Endothelial cell of umbilical vein (primary cell): ENCODE measurements at regions of chr12 and their contacts with region 1.

Region 1: DNA sequence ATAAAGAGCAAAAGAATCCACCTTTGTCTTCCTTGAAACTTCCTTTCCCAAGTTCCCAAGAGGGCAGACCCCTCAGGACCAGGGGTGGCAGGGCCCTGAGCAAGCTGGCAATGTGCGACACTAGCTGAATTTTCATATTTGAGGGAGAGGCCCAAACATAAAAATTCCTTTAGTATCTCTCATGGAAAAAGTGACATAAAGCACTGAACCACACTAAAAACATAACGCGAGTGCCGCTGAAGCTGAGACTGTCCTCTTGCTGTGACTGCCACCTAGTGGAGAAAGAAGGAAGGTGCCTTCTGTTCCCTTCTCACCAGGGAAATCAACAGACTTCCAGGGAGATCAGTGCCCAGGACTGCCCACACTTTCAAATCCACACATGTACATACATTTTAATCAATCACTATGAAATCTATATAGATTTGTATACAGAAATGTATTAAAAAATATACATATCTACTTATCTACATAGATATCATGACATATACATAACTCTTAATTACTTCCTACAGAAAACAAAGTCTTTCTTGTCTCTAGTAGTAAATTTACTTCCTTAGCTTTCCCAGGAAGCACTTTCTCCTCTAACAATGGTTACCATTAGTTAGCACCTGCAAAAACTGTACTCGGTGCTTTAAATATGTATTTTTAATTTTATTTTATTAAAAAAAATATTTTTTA is 53.8 kb downstream of the SSH1 start:
- DNase-seq: peak; percentile 94
- H3K4me3 ChIP-seq: no peak overlapping the region
- H3K27ac ChIP-seq: peak overlapping the region; percentile 90
- H3K4me1 ChIP-seq: peaks cover 31% of the 10 kb centered on the region
- H3K27me3 ChIP-seq: no peaks in the 10 kb centered on the region
- CTCF ChIP-seq: peak; percentile 82 to 85
- POLR2A ChIP-seq: no peak

Region 2: GRCh38 chr12:108562348-108563135 is 241.0 kb before region 1 on chr12 and contains the start of gene ISCU:
- CTCF ChIA-PET with region 1: interaction called, 29 read pairs
- POLR2A ChIA-PET with region 1: no interaction called
- dilution Hi-C with region 1: no loop called
- intact Hi-C with region 1: loop called (anchors 1 kb)
- DNase-seq: peak; percentile 96
- H3K4me3 ChIP-seq: peak within 1 kb of the TSS; percentile 78 to 95 (median 86)
- H3K27ac ChIP-seq: peak within 1 kb of the TSS; percentile 83
- H3K4me1 ChIP-seq: peaks cover 34% of the 10 kb centered on the region
- H3K27me3 ChIP-seq: no peaks in the 10 kb centered on the region
- CTCF ChIP-seq: no peak
- POLR2A ChIP-seq: peak; percentile 94
- total RNA-seq, gene ISCU: 74.8 and 75.0 TPM in 2 replicates

Region 3: DNA sequence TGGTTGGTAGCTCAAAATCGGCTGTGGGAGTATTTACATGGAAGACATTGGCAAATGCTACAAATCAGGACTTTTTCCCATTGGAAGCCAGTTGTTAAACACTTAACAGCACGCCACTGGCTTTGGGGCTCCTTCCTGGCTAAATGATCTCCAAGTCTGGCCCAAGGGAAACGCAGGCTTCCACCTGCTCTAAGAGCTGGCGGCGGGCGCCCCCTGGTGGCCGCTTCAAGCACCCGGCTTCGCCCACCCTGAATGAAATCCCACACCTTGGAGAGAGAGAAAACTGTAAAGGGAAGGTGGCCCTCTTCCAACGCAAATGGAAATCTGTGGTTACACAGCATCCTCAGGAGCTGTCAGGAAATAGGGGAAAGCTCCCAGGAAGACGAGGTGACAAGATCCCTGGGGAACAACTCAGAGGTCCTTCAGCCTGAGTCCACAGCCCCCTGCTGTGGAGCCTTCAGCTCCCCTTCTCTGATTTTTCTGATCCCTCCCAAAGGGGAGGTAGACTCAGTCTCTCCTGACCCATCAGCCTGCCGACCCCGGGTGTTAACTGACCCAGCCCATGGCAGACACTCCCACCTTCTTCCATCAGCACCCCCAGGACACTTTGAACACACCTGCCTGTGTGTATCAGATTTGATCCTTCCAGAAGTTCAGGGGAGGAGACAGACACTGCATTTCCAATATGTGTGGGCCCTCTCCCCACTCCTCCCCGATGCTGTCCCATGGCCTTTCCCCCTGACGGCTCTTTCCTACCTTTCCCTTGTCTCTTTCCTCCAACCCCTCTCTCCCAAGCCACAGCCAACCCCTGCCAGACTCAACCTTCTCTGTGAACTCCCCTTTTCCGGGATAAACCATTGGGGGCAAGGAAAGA is 185.3 kb before region 1 on chr12:
- CTCF ChIA-PET with region 1: interaction called, 48 read pairs
- POLR2A ChIA-PET with region 1: no interaction called
- dilution Hi-C with region 1: no loop called
- intact Hi-C with region 1: loop called (anchors 1 kb)
- DNase-seq: peak; percentile 71
- H3K4me3 ChIP-seq: no peak overlapping the region
- H3K27ac ChIP-seq: no peak overlapping the region
- H3K4me1 ChIP-seq: peaks cover 13% of the 10 kb centered on the region
- H3K27me3 ChIP-seq: no peaks in the 10 kb centered on the region
- CTCF ChIP-seq: peak; percentile 92 to 96
- POLR2A ChIP-seq: no peak

Region 4: DNA sequence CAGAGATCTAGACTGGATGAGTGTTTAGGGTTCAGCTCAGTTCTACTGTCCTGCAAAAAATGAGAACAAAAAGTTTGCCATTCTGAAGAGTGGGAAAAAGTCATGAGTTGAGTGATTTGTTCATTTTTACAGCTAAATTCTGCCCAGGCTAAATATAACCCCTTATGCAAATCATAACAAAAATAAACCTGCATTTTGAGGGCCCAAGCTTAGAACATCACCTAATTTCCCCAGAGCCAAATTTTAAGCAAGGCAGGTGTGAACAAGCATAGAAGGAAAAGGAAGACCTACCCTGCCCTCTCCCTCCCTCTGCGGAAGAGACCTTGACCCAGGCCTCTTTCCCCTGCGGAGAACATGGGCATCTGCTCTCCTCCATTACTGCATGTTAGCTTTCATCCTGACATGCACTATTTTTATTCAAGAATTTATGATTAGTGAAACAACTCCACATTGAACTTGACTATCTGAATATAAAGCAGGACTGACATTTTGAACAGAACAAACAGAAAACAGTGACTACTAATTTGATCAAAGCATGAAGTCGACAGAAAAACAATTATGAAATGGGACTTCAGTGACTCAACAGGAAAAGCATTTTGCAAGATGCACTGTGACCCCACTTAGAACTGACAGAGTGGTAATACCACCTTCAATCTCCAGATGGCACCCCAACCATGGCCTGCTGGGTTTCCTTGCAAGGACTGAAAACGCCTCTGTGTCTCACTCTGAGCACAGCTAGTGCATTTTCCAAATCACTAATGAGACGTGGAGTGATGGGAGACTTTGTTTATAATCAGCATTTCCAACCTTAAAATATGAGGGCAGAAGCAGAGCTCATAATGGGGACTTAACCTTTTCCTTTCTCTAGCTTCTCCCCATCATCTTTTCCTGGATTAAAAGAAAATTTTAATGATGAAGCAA is 139.0 kb before region 1 on chr12:
- CTCF ChIA-PET with region 1: interaction called, 173 read pairs
- POLR2A ChIA-PET with region 1: interaction called, 4 read pairs
- dilution Hi-C with region 1: no loop called
- intact Hi-C with region 1: loop called (anchors 1 kb)
- DNase-seq: peak; percentile 99
- H3K4me3 ChIP-seq: peak overlapping the region in 1 of 3 experiments; percentile 45
- H3K27ac ChIP-seq: peak overlapping the region; percentile 82
- H3K4me1 ChIP-seq: peaks cover 20% of the 10 kb centered on the region
- H3K27me3 ChIP-seq: no peaks in the 10 kb centered on the region
- CTCF ChIP-seq: peak; percentile 84 to 93
- POLR2A ChIP-seq: no peak

Region 5: DNA sequence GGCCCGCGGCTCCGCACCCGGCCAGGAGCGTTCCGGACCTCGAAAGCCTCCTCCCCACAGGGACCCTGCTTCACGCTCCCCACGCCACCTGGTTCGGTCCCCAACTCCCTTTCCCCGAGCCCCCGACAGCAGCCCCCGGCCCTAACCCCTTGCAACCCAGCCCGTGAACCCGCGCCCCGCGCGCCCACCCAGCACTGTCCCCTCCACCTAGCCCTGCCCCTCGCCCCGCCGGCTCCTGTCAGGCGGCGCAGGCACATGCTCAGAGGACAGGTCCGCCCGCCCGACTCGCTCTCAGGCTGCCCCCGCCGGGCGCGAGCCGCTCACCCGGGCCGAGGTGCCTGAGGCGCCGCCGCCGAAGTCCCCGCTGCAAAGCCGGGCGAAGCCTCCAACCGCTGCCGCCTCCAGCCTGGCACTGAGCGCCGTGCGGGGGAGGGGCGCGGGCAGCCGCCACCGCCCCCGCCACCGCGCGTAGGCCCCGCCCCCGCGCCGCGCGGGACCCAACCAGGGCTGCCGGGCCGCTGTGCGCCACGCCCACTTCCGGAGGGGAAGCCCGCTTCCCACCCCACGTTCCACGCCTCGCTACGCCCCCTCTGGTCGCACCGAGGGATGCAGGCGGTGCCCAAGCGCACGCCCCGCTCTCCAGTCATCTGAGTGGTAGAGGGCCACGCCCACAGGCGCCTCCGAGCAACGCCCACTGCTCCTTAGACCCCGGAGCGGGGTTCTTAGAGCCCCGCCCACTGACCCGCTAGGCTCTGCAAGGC is 72.3 kb before region 1 on chr12 and contains the start of gene CORO1C:
- CTCF ChIA-PET with region 1: interaction called, 6 read pairs
- POLR2A ChIA-PET with region 1: no interaction called
- dilution Hi-C with region 1: no loop called
- intact Hi-C with region 1: loop called (anchors 1 kb)
- DNase-seq: peak; percentile 99
- H3K4me3 ChIP-seq: peak within 1 kb of the TSS; percentile 57 to 91 (median 76)
- H3K27ac ChIP-seq: peak within 1 kb of the TSS; percentile 92
- H3K4me1 ChIP-seq: peaks cover 29% of the 10 kb centered on the region
- H3K27me3 ChIP-seq: no peaks in the 10 kb centered on the region
- CTCF ChIP-seq: peak; percentile 89 to 95
- POLR2A ChIP-seq: peak; percentile 93
- total RNA-seq, gene CORO1C: 212 and 240 TPM in 2 replicates

Region 6: DNA sequence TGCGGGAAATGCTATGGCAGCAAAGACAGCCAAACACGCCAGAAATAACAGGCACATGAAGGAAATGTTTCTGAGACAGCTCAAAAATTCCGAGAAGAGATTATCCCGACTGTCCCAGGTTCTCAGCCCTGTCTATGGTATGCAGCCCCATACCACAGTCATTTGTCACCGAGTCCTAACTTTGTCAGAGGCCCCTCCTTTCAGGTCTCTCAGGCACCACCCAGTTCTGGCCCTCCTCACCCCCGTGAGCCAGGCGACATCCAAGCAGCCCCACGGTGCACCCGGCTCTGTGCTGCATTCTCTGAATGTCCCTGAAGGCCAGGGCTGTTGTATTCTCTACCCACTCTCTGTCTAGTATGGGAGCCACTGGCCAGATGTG is 29.8 kb after region 1 on chr12:
- CTCF ChIA-PET with region 1: interaction called, 15 read pairs
- POLR2A ChIA-PET with region 1: interaction called, 4 read pairs
- dilution Hi-C with region 1: no loop called
- intact Hi-C with region 1: no loop called
- DNase-seq: peak; percentile 81
- H3K4me3 ChIP-seq: no peak overlapping the region
- H3K27ac ChIP-seq: peak overlapping the region; percentile 97
- H3K4me1 ChIP-seq: peaks cover 67% of the 10 kb centered on the region
- H3K27me3 ChIP-seq: no peaks in the 10 kb centered on the region
- CTCF ChIP-seq: no peak
- POLR2A ChIP-seq: no peak

Region 7: GRCh38 chr12:108856428-108857157 is 53.0 kb after region 1 on chr12:
- CTCF ChIA-PET with region 1: interaction called, 67 read pairs
- POLR2A ChIA-PET with region 1: interaction called, 5 read pairs
- dilution Hi-C with region 1: no loop called
- intact Hi-C with region 1: loop called (anchors 1 kb)
- DNase-seq: peak; percentile 49
- H3K4me3 ChIP-seq: peak overlapping the region; percentile 0 to 74 (median 60)
- H3K27ac ChIP-seq: peak overlapping the region; percentile 98
- H3K4me1 ChIP-seq: peaks cover 46% of the 10 kb centered on the region
- H3K27me3 ChIP-seq: no peaks in the 10 kb centered on the region
- CTCF ChIP-seq: no peak
- POLR2A ChIP-seq: peak; percentile 22